MCF 10A (cell line): ENCODE measurements at regions of chr11 and their contacts with region 1.

Region 1: GRCh38 chr11:61602775-61603569 is 22.1 kb upstream of the SYT7 start:
- DNase-seq: peak; percentile 97
- H3K4me3 Mint-ChIP-seq: peak overlapping the region; percentile 31
- H3K27ac Mint-ChIP-seq: peak overlapping the region; percentile 88
- H3K4me1 Mint-ChIP-seq: peaks cover 48% of the 10 kb centered on the region
- H3K27me3 Mint-ChIP-seq: no peaks in the 10 kb centered on the region
- CTCF ChIP-seq: no peak

Region 2: GRCh38 chr11:61468002-61468401 is 135.0 kb before region 1 on chr11:
- CTCF ChIA-PET with region 1: no interaction called
- POLR2A ChIA-PET with region 1: no interaction called
- intact Hi-C with region 1: no loop called
- DNase-seq: no peak
- H3K4me3 Mint-ChIP-seq: no peak overlapping the region
- H3K27ac Mint-ChIP-seq: no peak overlapping the region
- H3K4me1 Mint-ChIP-seq: no peaks in the 10 kb centered on the region
- H3K27me3 Mint-ChIP-seq: no peaks in the 10 kb centered on the region
- CTCF ChIP-seq: no peak

Region 3: GRCh38 chr11:61581030-61581928 is 21.7 kb before region 1 on chr11 and contains the start of gene SYT7:
- CTCF ChIA-PET with region 1: interaction called, 5 read pairs
- POLR2A ChIA-PET with region 1: interaction called, 12 read pairs
- intact Hi-C with region 1: loop called (anchors 1 kb)
- DNase-seq: peak; percentile 95
- H3K4me3 Mint-ChIP-seq: peak within 1 kb of the TSS; percentile 71
- H3K27ac Mint-ChIP-seq: no peak within 1 kb of the TSS
- H3K4me1 Mint-ChIP-seq: peaks cover 12% of the 10 kb centered on the region
- H3K27me3 Mint-ChIP-seq: no peaks in the 10 kb centered on the region
- CTCF ChIP-seq: no peak
- total RNA-seq, gene SYT7: 25.2 and 57.7 TPM in 2 replicates

Region 4: DNA sequence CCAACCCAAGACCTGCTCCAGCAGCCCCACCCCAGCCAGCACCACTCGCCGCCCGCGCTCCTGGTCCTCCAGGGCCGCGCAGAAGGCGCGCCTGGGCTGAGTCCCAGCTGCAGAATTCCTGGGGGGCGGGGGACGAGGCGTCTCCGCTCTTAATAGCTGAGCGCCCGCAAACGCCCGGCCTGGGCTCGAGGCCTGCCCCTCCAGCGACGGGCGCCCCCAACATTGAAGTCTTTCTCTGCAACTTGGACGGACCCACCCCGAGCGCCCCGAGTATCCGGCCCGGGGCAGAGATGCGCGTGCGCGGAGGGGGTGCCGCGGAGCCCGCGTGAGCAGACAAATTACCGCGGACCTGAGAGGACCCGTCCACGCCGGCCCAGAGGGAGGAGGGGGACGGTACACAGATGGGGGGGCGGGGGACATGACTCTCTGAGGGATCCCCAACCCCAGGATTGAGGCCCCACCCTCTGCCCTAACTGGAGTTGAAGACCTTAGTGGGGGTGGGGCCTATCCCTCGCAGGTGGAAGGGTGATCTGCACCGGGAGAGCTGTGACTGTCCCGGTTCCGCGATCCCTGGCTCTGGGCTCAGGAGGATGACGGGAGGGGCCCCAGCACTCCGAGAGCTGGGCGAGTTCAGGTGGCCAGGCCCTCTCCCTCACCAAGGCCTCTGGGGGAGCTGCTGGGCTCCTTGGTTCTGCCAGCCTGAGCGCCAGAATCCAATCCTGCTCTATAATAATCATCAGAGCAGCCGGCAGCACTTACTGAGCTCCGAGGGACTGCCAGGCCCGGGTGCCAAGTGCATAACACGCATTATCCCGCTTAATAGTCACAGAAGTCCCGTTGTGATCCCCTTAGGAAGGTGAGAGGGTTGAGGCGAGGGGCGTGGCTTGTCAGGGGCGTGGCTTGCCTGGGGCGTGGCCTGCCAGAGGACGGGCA is 15.2 kb before region 1 on chr11:
- CTCF ChIA-PET with region 1: interaction called, 7 read pairs
- POLR2A ChIA-PET with region 1: interaction called, 12 read pairs
- intact Hi-C with region 1: no loop called
- DNase-seq: peak; percentile 50
- H3K4me3 Mint-ChIP-seq: peak overlapping the region; percentile 61
- H3K27ac Mint-ChIP-seq: no peak overlapping the region
- H3K4me1 Mint-ChIP-seq: peaks cover 15% of the 10 kb centered on the region
- H3K27me3 Mint-ChIP-seq: no peaks in the 10 kb centered on the region
- CTCF ChIP-seq: peak; percentile 23

Region 5: GRCh38 chr11:61616434-61616833 is 13.5 kb after region 1 on chr11:
- CTCF ChIA-PET with region 1: no interaction called
- POLR2A ChIA-PET with region 1: interaction called, 8 read pairs
- intact Hi-C with region 1: loop called (anchors 1 kb)
- DNase-seq: no peak
- H3K4me3 Mint-ChIP-seq: peak overlapping the region; percentile 5
- H3K27ac Mint-ChIP-seq: no peak overlapping the region
- H3K4me1 Mint-ChIP-seq: peaks cover 18% of the 10 kb centered on the region
- H3K27me3 Mint-ChIP-seq: no peaks in the 10 kb centered on the region
- CTCF ChIP-seq: no peak